Gastrocnemius medialis (tissue), 4 donors: ENCODE measurements at regions of chr10 and their contacts with region 1.

Region 1: DNA sequence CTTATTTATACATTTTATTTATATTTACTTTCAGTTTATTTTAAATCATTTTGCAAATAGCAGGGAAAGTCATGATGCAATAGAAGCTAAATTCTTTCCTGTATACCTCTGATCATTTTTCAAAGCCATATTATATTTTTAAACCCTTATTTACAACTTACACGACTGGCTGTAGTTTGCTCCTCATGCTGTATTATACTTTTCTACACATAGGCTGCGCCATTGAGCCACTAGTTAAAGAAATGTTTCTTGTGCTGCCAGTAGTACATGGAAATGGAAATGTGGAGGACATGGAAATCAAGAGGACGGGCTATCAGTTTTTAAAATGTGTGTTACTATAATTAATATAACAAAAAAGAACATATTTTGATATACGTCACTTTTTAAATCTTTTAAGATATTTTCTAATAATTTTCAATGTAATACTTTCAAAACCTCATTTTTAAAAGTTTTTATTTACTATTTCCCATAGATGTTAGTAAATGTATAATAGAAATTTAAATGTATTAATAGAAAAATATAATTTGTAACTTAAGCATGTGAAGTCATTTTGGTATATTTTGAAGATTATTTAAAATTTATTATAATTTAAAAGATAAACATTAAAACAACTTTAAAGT is 118.5 kb downstream of the VTI1A start:
- DNase-seq: no peak
- ATAC-seq: peak in 1 of 2 donors; percentile 51
- H3K4me3 ChIP-seq: no peak overlapping the region
- H3K27ac ChIP-seq: no peak overlapping the region
- H3K4me1 ChIP-seq: no peaks in the 10 kb centered on the region
- H3K27me3 ChIP-seq: no peaks in the 10 kb centered on the region
- CTCF ChIP-seq: peak; percentile 22 to 47 (median 35)
- POLR2A ChIP-seq: no peak

Region 2: DNA sequence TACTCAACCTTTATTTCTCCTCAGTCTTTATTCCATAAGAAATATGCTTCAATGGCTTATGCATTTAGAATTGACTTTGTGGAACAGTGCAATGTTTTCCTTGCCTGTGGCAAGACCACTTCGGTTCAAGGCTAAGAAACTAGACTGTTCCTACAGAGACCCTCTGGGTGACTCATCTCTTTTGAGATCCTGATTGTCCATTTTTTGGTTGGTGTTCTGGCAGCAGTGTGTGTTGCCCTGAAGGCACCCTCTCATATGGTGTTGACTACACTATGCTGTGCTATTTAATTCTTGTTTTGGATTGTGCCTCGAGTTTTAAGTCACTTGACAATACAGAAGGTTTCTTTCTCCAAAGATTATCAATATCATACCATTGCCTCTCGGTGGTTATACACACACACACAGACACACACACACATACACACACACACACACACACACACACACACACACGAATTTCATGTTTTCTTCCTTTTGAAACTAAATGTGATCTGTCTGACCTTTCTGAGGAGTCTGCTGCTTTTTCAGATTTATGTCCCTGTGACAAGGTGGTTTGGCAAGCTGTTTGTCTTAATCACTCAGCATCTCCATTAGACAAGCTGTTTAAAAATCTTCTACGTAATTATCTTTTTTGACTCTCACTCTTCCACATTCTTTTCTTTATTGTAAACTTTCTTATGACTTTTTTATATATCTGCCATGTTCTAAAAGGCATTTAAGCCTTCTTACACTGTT is 68.7 kb after region 1 on chr10:
- in situ Hi-C with region 1: no loop called
- intact Hi-C with region 1: no loop called
- DNase-seq: no peak
- ATAC-seq: no peak
- H3K4me3 ChIP-seq: no peak overlapping the region
- H3K27ac ChIP-seq: no peak overlapping the region
- H3K4me1 ChIP-seq: no peaks in the 10 kb centered on the region
- H3K27me3 ChIP-seq: no peaks in the 10 kb centered on the region
- CTCF ChIP-seq: no peak
- POLR2A ChIP-seq: no peak

Region 3: DNA sequence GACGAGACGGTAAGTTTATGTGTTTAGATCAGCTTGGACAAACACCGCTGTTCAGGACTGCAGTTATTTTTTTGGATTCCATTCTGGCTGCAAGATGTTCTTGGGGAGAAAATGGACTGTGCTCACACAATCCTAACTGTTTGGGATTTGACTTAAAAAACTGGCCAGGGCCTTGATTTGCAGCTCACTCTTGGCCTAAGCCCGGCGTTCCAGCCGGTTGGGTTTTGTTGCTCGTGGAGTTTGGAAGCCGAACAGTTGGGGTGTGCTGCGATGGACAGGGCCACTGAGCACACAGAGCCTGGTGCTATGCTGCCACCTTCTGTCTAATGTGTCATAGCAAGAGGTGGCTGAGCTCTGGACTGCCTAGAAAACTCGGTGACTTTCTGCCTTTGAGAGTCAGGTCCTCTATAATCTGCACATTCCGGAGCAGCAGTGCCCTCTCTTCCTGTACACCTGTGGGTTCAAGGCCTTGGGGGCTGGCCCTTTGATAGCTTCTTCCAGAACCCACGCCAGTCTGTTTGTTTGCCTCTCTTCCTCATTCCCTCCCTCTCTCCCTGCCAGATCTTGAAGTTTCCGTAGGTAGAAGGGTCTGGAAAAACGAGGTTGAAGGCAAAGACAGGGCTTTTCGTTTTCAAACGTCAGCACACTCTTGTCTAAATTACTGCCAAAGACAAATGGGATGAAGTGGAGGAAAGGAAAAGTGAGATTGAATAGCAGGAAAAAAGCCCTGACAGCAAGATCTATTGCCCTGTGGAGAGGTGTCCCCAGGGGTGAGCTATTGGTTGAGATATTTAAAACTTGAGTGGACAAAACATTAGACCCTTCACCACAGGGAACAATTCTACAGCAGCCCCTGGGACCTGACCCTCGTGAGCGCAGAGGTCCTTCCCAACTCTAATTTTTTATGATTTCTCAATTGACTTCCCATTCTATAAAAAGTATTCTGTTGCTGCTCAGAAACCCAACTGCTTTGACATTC is 819.8 kb after region 1 on chr10:
- in situ Hi-C with region 1: loop called in 2 of 4 experiments (anchors 10 to 25 kb)
- intact Hi-C with region 1: no loop called
- DNase-seq: peak; percentile 61 to 73
- ATAC-seq: peak; percentile 93 to 96
- H3K4me3 ChIP-seq: peak overlapping the region in 1 of 4 donors; percentile 35
- H3K27ac ChIP-seq: peak overlapping the region; percentile 40 to 57 (median 48)
- H3K4me1 ChIP-seq: peaks cover 0 to 4% of the 10 kb centered on the region in 2 donors
- H3K27me3 ChIP-seq: no peaks in the 10 kb centered on the region
- CTCF ChIP-seq: peak; percentile 45 to 80 (median 68)
- POLR2A ChIP-seq: no peak